A549 (cell line): ENCODE measurements at regions of chr1 and their contacts with region 1.

Region 1: GRCh38 chr1:151024540-151025146 is 11.7 kb upstream of the BNIPL start:
- DNase-seq: peak; percentile 72 to 84
- ATAC-seq: peak; percentile 98 to 99
- H3K4me3 ChIP-seq: no peak overlapping the region
- H3K27ac ChIP-seq: no peak overlapping the region
- H3K4me1 ChIP-seq: no peaks in the 10 kb centered on the region
- CTCF ChIP-seq: peak; percentile 57
- EP300 ChIP-seq: no peak
- POLR2A ChIP-seq: no peak
- RAD21 ChIP-seq: peak; percentile 66 to 82

Region 2: DNA sequence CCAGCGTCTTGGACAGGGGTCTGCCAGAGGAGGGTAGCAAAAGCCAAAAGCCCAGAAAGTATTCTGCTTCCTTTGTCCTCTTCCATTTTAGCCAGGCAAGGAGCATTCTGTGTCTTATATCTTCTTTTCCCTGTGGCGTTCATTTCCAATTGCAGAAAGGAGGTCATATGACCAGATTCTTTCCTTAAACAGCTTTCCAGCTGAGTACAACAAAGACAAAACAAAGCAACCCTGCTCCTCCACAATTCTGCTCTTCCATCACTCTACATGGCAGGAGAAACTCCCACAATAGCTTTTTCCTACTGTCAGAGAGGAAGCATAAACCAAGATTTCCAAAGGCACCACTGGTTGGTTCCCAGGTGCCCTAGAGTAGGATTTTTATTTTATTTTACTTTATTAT is 414.9 kb before region 1 on chr1:
- CTCF ChIA-PET with region 1: no interaction called
- POLR2A ChIA-PET with region 1: no interaction called
- DNase-seq: no peak
- ATAC-seq: no peak
- H3K4me3 ChIP-seq: no peak overlapping the region
- H3K27ac ChIP-seq: peak overlapping the region; percentile 89 to 95
- H3K4me1 ChIP-seq: peaks cover 61% of the 10 kb centered on the region
- CTCF ChIP-seq: no peak
- EP300 ChIP-seq: no peak
- POLR2A ChIP-seq: no peak
- RAD21 ChIP-seq: no peak

Region 3: DNA sequence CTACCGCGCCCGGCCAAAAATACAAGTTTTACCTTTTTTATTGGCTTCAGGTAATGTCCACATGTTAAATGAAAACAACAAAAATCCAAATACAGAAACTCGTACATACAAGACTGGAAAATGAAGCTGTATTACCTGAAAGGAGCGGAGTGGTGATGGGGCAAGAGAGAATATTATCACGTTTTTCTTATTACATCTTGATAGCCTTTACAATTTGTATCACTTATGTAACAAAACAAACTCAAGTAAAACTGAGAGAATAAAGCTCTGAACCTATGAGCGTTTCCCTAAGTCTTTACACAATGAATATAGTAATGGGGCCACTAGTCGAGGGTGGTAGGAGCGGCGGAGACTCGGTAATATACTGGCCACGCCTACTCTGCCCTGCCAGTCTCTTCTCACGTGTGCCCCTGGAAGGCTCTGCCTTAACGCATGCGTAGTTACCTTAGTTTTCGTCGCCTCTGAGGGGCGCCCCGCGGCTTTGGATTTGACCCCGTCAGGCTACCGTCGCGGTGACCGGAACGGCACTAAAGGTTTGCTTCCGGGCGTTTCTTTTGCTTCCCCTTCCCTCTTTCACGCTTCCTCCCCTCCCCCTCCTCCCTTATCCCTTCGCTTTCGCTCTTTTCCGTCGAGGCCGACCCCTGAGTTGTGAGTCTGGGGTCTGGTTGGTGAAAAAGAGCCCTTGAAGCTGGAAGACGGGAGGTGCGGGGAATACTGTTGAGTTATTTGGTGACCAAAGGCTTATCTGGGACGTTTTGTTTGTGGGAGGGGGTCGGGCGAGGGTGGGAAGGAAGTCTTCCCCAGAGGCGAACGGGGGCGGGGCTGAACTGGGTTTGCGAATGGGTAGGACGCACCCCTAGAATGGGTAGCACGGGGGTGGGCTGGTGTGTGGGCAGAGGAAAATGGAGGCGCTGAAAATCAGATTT is 98.6 kb before region 1 on chr1 and contains the start of gene SETDB1:
- CTCF ChIA-PET with region 1: no interaction called
- POLR2A ChIA-PET with region 1: no interaction called
- DNase-seq: peak; percentile 85 to 98
- ATAC-seq: peak; percentile 96
- H3K4me3 ChIP-seq: peak within 1 kb of the TSS; percentile 62
- H3K27ac ChIP-seq: peak within 1 kb of the TSS; percentile 91 to 95
- H3K4me1 ChIP-seq: peaks cover 16% of the 10 kb centered on the region; the same call in 2 of the 3 replicates
- CTCF ChIP-seq: no peak
- EP300 ChIP-seq: no peak
- POLR2A ChIP-seq: peak; percentile 35
- RAD21 ChIP-seq: no peak
- polyA plus RNA-seq, gene SETDB1: 48.8 and 56.9 TPM in 2 replicates

Region 4: DNA sequence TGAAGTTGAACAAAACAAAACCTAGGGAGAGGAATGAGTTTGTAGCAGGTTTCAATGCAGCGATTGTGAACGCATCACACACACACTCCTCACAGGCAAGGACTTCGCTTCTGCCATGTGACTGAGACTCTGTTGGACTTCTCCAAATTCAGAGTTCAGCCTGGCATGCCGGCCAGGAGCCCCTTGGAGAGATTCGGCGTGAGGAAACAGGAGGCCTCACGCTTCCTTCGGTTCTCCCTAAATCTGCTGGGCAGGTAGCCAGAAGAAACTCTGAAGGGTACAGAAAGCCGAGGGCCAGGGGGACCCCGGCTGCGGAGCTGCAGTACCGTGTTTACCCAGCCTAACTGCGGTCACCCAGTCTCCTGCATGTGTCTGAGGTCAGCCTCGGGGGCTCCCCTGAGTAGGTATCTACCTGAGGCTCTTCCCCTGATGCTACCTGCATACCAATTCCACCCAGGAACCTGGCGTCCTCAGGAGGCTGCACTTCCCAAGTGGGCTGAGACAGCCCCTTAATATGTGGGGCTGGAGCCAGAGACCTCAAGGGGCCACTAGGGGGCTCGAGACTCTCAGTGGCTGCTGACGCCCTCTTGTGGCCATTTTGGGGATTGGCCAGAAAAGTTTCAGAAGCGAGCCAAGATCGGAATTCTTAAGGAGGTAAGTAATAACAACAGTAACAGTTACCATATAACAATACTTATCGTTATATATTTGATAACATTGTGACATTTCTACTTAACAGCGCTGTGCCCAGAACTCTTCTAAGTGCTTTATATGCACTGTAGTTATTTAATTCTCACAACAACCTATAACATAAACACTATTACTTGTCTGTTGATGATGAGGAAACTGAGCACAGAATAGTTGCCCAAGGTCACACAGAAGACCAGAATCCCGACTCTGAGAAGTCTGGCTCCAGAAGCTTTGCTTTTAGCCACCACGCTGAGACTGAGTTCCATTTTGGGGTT is 45.3 kb before region 1 on chr1:
- CTCF ChIA-PET with region 1: interaction called, 14 read pairs
- POLR2A ChIA-PET with region 1: no interaction called
- DNase-seq: peak; percentile 89 to 93
- ATAC-seq: peak; percentile 47 to 73
- H3K4me3 ChIP-seq: no peak overlapping the region
- H3K27ac ChIP-seq: peak overlapping the region; percentile 68 to 100
- H3K4me1 ChIP-seq: peaks cover 61% of the 10 kb centered on the region
- CTCF ChIP-seq: peak; percentile 100
- EP300 ChIP-seq: no peak
- POLR2A ChIP-seq: no peak
- RAD21 ChIP-seq: peak; percentile 87 to 89

Region 5: DNA sequence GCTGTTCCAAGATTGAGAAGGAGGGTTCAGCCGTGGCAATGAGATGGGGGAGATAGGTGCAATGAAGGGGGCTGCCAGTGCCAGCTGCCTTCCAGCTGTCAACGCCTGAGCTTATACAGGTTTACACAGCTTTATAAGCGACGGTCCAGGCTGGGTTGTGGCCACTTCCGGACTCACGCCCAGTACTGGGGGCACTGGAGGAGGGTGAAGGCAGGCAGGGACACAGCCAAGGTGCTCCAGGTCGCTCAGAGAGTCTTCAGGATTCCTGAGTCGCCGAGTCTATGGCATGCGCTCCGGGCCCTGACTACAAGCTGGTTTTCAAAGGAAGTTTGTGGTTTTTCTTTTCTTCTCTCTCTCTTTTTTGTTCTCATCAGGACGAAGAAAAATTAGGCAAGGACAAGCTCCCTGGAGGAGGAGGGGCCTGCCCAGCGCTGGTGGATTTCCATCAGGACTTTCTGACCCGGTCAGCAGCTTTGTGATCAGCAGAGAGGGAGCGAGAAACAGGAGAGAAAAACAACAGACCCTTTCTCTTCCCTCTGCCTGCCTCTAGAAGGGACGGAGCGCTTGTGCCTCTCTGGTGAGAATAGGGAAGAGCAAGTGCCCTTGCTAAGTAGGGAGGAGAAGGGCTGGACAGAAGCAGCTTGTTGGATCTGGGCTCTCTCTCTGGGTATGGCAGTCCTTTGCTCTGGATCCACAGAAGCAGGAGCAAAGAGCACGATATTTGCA is 18.2 kb before region 1 on chr1 and contains the start of gene MINDY1:
- CTCF ChIA-PET with region 1: interaction called, 14 read pairs
- POLR2A ChIA-PET with region 1: no interaction called
- DNase-seq: peak; percentile 85 to 95
- ATAC-seq: peak; percentile 91 to 92
- H3K4me3 ChIP-seq: peak within 1 kb of the TSS; percentile 88
- H3K27ac ChIP-seq: peak within 1 kb of the TSS; percentile 77 to 95
- H3K4me1 ChIP-seq: peaks cover 36% of the 10 kb centered on the region
- CTCF ChIP-seq: peak; percentile 35; the same call in 2 of the 3 replicates
- EP300 ChIP-seq: no peak
- POLR2A ChIP-seq: no peak; the same call in none of the 2 replicates
- RAD21 ChIP-seq: peak; percentile 43 to 54; a peak in 4 of 5 replicates
- polyA plus RNA-seq, gene MINDY1: 5.2 and 7.9 TPM in 2 replicates

Region 6: DNA sequence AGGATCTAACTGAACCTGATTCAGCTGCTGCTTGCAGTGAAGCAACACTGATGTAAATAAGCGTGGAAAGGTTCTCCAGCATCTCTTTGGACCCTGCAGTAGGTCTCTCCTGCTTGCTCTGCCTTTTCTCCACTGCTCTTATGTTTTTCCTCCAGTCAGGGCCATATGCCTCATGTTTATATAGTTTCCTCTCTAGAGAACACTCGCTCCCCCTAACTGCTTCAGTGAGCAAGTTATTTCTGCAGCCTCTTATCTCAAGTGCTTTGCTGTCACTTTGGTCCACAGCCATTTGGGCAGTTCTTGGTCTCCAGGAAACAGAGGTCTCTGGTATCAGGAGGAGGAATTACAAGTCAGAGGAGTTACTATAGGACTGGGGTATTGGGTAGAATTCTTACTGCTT is 11.1 kb before region 1 on chr1:
- CTCF ChIA-PET with region 1: interaction called, 14 read pairs
- POLR2A ChIA-PET with region 1: no interaction called
- DNase-seq: no peak
- ATAC-seq: peak in 1 of 2 experiments; percentile 15; a peak in 2 of 6 replicates
- H3K4me3 ChIP-seq: no peak overlapping the region
- H3K27ac ChIP-seq: no peak overlapping the region
- H3K4me1 ChIP-seq: peaks cover 33% of the 10 kb centered on the region
- CTCF ChIP-seq: no peak
- EP300 ChIP-seq: no peak
- POLR2A ChIP-seq: no peak
- RAD21 ChIP-seq: no peak

Region 7: DNA sequence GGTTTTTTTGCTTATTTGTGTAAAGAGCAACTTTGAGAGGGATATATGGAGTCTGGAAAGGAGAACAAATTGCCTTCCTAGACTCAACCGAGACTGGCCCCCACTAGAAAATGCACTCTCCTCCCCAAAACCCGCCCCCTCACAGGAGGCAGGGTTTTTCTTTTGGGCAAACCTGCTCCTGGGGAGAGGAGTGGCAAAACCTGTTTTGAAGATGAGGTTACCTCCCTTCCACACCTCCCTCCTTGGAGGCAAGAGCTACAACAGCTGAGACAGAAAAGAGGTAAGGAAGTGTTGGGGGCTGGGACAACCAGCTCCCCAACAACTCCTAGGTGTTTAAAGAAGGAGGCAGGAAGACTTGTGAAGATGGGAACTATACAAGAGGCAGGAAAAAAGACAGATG is 11.7 kb after region 1 on chr1 and contains the start of gene BNIPL:
- CTCF ChIA-PET with region 1: interaction called, 14 read pairs
- POLR2A ChIA-PET with region 1: no interaction called
- DNase-seq: no peak
- ATAC-seq: no peak
- H3K4me3 ChIP-seq: no peak within 1 kb of the TSS
- H3K27ac ChIP-seq: no peak within 1 kb of the TSS
- H3K4me1 ChIP-seq: no peaks in the 10 kb centered on the region
- CTCF ChIP-seq: no peak
- EP300 ChIP-seq: no peak
- POLR2A ChIP-seq: no peak
- RAD21 ChIP-seq: no peak
- polyA plus RNA-seq, gene BNIPL: 0.30 and 0.38 TPM in 2 replicates

Region 8: DNA sequence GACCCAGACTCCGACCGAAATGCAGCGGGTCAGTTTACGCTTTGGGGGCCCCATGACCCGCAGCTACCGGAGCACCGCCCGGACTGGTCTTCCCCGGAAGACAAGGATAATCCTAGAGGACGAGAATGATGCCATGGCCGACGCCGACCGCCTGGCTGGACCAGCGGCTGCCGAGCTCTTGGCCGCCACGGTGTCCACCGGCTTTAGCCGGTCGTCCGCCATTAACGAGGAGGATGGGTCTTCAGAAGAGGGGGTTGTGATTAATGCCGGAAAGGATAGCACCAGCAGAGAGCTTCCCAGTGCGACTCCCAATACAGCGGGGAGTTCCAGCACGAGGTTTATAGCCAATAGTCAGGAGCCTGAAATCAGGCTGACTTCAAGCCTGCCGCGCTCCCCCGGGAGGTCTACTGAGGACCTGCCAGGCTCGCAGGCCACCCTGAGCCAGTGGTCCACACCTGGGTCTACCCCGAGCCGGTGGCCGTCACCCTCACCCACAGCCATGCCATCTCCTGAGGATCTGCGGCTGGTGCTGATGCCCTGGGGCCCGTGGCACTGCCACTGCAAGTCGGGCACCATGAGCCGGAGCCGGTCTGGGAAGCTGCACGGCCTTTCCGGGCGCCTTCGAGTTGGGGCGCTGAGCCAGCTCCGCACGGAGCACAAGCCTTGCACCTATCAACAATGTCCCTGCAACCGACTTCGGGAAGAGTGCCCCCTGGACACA is 23.4 kb after region 1 on chr1:
- CTCF ChIA-PET with region 1: interaction called, 62 read pairs
- POLR2A ChIA-PET with region 1: no interaction called
- DNase-seq: peak; percentile 83 to 96
- ATAC-seq: peak; percentile 87 to 91
- H3K4me3 ChIP-seq: peak overlapping the region; percentile 80
- H3K27ac ChIP-seq: peak overlapping the region; percentile 94 to 96
- H3K4me1 ChIP-seq: peaks cover 16% of the 10 kb centered on the region
- CTCF ChIP-seq: peak; percentile 67; the same call in 2 of the 3 replicates
- EP300 ChIP-seq: no peak
- POLR2A ChIP-seq: peak; percentile 53; the same call in 1 of the 2 replicates
- RAD21 ChIP-seq: peak in 1 of 2 experiments; percentile 17; a peak in 1 of 5 replicates

Region 9: GRCh38 chr1:151156515-151156819 is 131.8 kb after region 1 on chr1 and contains the start of gene TNFAIP8L2:
- CTCF ChIA-PET with region 1: interaction called, 22 read pairs
- POLR2A ChIA-PET with region 1: no interaction called
- DNase-seq: no peak
- ATAC-seq: peak; percentile 72 to 82
- H3K4me3 ChIP-seq: no peak within 1 kb of the TSS
- H3K27ac ChIP-seq: no peak within 1 kb of the TSS
- H3K4me1 ChIP-seq: no peaks in the 10 kb centered on the region
- CTCF ChIP-seq: no peak
- EP300 ChIP-seq: no peak
- POLR2A ChIP-seq: no peak
- RAD21 ChIP-seq: no peak
- polyA plus RNA-seq, gene TNFAIP8L2: not detected in 2 replicates